Activated T-helper 1 cell treated with anti-CD3 and anti-CD28 coated beads, Interleukin-12 subunit alpha, Interleukin-12 subunit beta, Interleukin-2, Interleukin-4 antibody, amounts not matched to agents 30 ng/mL and 10 ng/mL and 1 ng/mL, durations not matched to agents 14 hours and 24 hours and 36 hours (primary cell): ENCODE measurements at regions of chr19 and their contacts with region 1.

Region 1: GRCh38 chr19:12881172-12881808 is at the start of gene DNASE2:
- DNase-seq: peak; percentile 88
- H3K4me3 Mint-ChIP-seq: peak within 1 kb of the TSS; percentile 90
- H3K27ac Mint-ChIP-seq: peak within 1 kb of the TSS; percentile 83
- H3K4me1 Mint-ChIP-seq: peaks cover 26% of the 10 kb centered on the region
- H3K27me3 Mint-ChIP-seq: no peaks in the 10 kb centered on the region
- total RNA-seq, gene DNASE2: 22.9 and 23.7 TPM in 2 replicates

Region 2: GRCh38 chr19:12495002-12495802 is 386.1 kb before region 1 on chr19:
- intact Hi-C with region 1: no loop called
- DNase-seq: peak; percentile 78
- H3K4me3 Mint-ChIP-seq: peak overlapping the region; percentile 83
- H3K27ac Mint-ChIP-seq: peak overlapping the region; percentile 52
- H3K4me1 Mint-ChIP-seq: peaks cover 6% of the 10 kb centered on the region
- H3K27me3 Mint-ChIP-seq: peaks cover 2% of the 10 kb centered on the region

Region 3: GRCh38 chr19:12656899-12657571 is 224.3 kb before region 1 on chr19:
- intact Hi-C with region 1: no loop called
- DNase-seq: no peak
- H3K4me3 Mint-ChIP-seq: no peak overlapping the region
- H3K27ac Mint-ChIP-seq: no peak overlapping the region
- H3K4me1 Mint-ChIP-seq: peaks cover 4% of the 10 kb centered on the region
- H3K27me3 Mint-ChIP-seq: no peaks in the 10 kb centered on the region

Region 4: GRCh38 chr19:12806239-12807081 is 74.8 kb before region 1 on chr19 and contains the start of gene RNASEH2A:
- intact Hi-C with region 1: loop called (anchors 5 kb)
- DNase-seq: peak; percentile 89
- H3K4me3 Mint-ChIP-seq: peak within 1 kb of the TSS; percentile 96
- H3K27ac Mint-ChIP-seq: peak within 1 kb of the TSS; percentile 89
- H3K4me1 Mint-ChIP-seq: peaks cover 17% of the 10 kb centered on the region
- H3K27me3 Mint-ChIP-seq: no peaks in the 10 kb centered on the region
- total RNA-seq, gene RNASEH2A: 36.1 and 37.5 TPM in 2 replicates

Region 5: GRCh38 chr19:12838182-12838885 is 43.0 kb before region 1 on chr19 and contains the start of gene MAST1:
- intact Hi-C with region 1: loop called (anchors 2 kb)
- DNase-seq: peak; percentile 47
- H3K4me3 Mint-ChIP-seq: peak within 1 kb of the TSS; percentile 68
- H3K27ac Mint-ChIP-seq: no peak within 1 kb of the TSS
- H3K4me1 Mint-ChIP-seq: peaks cover 30% of the 10 kb centered on the region
- H3K27me3 Mint-ChIP-seq: peaks cover 59% of the 10 kb centered on the region
- total RNA-seq, gene MAST1: 1.4 and 1.7 TPM in 2 replicates

Region 6: DNA sequence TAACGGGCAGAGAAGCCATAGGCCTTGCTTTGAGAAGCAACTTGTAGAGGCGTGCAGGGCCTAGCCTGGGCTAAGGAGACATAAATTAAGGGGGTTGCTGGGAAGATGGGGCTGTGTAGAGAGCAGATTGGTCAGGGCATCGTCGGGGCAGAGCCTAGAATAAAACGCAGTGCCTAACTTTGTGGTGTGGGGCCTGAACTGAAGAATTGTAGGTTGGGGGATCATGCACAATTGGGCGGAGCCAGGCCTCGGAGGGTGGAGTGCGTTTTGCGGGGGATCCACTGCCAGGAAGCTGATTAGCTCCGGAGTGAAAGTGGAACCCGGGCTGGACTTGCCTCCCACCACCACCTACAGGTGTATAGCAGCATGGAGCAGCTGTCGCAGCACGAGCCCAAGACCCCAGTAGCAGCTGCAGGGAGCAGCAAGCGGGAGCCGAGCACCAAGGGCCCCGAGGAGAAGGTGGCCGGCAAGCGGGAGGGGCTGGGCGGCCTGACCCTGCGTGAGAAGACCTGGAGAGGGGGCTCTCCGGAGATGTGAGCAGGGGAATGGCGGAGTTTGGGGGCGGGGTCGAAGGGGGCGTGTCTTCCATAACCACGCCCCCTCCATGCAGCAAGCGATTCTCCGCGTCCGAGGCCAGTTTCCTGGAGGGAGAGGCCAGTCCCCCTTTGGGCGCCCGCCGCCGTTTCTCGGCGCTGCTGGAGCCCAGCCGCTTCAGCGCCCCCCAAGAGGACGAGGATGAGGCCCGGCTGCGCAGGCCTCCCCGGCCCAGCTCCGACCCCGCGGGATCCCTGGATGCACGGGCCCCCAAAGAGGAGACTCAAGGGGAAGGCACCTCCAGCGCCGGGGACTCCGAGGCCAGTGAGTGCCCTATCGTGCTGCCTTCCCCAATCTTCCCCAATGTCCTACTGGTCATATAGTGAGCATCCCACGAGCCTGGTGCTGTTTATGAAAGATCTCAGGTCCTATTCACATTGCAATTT is 13.9 kb before region 1 on chr19:
- intact Hi-C with region 1: loop called (anchors 2 kb)
- DNase-seq: peak; percentile 68
- H3K4me3 Mint-ChIP-seq: peak overlapping the region; percentile 76
- H3K27ac Mint-ChIP-seq: peak overlapping the region; percentile 40
- H3K4me1 Mint-ChIP-seq: no peaks in the 10 kb centered on the region
- H3K27me3 Mint-ChIP-seq: peaks cover 3% of the 10 kb centered on the region

Region 7: DNA sequence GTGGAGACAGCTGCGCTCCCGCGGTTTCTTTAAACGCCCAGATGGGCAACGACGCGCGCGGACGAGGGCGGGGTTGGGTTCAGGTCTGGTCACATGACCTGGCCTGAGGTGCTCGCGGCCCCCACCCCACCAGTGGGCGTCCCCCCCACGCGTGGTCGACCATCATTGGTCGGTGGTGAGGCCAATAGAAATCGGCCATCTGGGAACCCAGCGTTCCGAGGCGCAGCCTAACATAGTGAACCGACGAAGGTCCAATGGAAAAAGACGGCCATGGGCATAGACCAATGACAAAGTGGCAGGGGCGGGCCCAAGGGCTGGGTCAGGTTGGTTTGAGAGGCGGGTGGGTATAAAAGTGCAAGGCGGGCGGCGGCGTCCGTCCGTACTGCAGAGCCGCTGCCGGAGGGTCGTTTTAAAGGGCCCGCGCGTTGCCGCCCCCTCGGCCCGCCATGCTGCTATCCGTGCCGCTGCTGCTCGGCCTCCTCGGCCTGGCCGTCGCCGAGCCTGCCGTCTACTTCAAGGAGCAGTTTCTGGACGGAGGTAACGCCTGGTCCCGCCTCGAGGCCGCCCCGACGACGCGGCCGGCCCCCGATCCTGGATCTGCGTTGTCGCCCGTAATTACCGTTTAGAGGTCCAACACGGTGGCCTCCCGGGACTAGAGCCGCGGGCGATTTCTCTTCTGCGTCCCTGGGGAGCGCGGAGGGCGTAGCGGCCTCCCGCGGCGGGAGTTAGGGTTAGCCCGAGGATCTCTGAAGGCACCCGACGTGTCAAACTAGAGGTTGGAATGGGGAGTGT is 57.1 kb after region 1 on chr19 and contains the start of gene CALR:
- intact Hi-C with region 1: loop called (anchors 1 kb)
- DNase-seq: peak; percentile 100
- H3K4me3 Mint-ChIP-seq: peak within 1 kb of the TSS; percentile 100
- H3K27ac Mint-ChIP-seq: peak within 1 kb of the TSS; percentile 94
- H3K4me1 Mint-ChIP-seq: peaks cover 51% of the 10 kb centered on the region
- H3K27me3 Mint-ChIP-seq: no peaks in the 10 kb centered on the region
- total RNA-seq, gene CALR: 913 and 933 TPM in 2 replicates

Region 8: GRCh38 chr19:12965017-12965811 is 83.9 kb after region 1 on chr19:
- intact Hi-C with region 1: loop called (anchors 1 kb)
- DNase-seq: peak; percentile 75
- H3K4me3 Mint-ChIP-seq: peak overlapping the region; percentile 84
- H3K27ac Mint-ChIP-seq: peak overlapping the region; percentile 84
- H3K4me1 Mint-ChIP-seq: peaks cover 16% of the 10 kb centered on the region
- H3K27me3 Mint-ChIP-seq: peaks cover 5% of the 10 kb centered on the region

Region 9: GRCh38 chr19:13132471-13133180 is 251.3 kb after region 1 on chr19:
- intact Hi-C with region 1: no loop called
- DNase-seq: peak; percentile 46
- H3K4me3 Mint-ChIP-seq: peak overlapping the region; percentile 77
- H3K27ac Mint-ChIP-seq: peak overlapping the region; percentile 90
- H3K4me1 Mint-ChIP-seq: peaks cover 41% of the 10 kb centered on the region
- H3K27me3 Mint-ChIP-seq: no peaks in the 10 kb centered on the region